Transverse colon (tissue), 4 donors: ENCODE measurements at regions of chr3 and their contacts with region 1.

Region 1: GRCh38 chr3:156681002-156681401 is 6.6 kb downstream of the TIPARP start:
- DNase-seq: peak; percentile 28
- H3K4me3 ChIP-seq: peak overlapping the region in 1 of 4 donors; percentile 4
- H3K27ac ChIP-seq: peak overlapping the region; percentile 16 to 34 (median 26)
- H3K4me1 ChIP-seq: peaks cover 46 to 94% (median 49%) of the 10 kb centered on the region in 4 donors
- H3K27me3 ChIP-seq: no peaks in the 10 kb centered on the region
- CTCF ChIP-seq: no peak
- EP300 ChIP-seq: no peak
- POLR2A ChIP-seq: no peak

Region 2: GRCh38 chr3:156816800-156817645 is 136.0 kb after region 1 on chr3:
- in situ Hi-C with region 1: loop called in 2 of 4 experiments (anchors 10 kb)
- intact Hi-C with region 1: no loop called
- DNase-seq: peak; percentile 91
- H3K4me3 ChIP-seq: peak overlapping the region; percentile 35 to 65 (median 56)
- H3K27ac ChIP-seq: peak overlapping the region; percentile 84 to 91 (median 88)
- H3K4me1 ChIP-seq: peaks cover 9 to 38% (median 22%) of the 10 kb centered on the region in 4 donors
- H3K27me3 ChIP-seq: no peaks in the 10 kb centered on the region
- CTCF ChIP-seq: peak in 2 of 5 experiments; percentile 10 to 15
- EP300 ChIP-seq: peak; percentile 89
- POLR2A ChIP-seq: peak; percentile 79

Region 3: GRCh38 chr3:156826144-156826895 is 145.3 kb after region 1 on chr3 and contains the start of gene LEKR1:
- in situ Hi-C with region 1: loop called in 1 of 4 experiments (anchors 10 kb)
- intact Hi-C with region 1: no loop called
- DNase-seq: peak; percentile 92
- H3K4me3 ChIP-seq: peak within 1 kb of the TSS; percentile 55 to 74 (median 56)
- H3K27ac ChIP-seq: peak within 1 kb of the TSS; percentile 90 to 97 (median 92)
- H3K4me1 ChIP-seq: peaks cover 6 to 16% (median 10%) of the 10 kb centered on the region in 4 donors
- H3K27me3 ChIP-seq: no peaks in the 10 kb centered on the region
- CTCF ChIP-seq: peak in 1 of 5 experiments; percentile 12
- EP300 ChIP-seq: no peak
- POLR2A ChIP-seq: peak; percentile 87
- total RNA-seq, gene LEKR1: 0.40 to 3.3 (median 0.96) TPM in 3 of 4 donors, not detected in the other